ENCODE measurements at regions of chr16 and their contacts with region 1.

Region 1: GRCh38 chr16:86800894-86801293 is 222.5 kb downstream of the FOXL1 start:
- DNase-seq: no peak
- H3K4me3 ChIP-seq: no peak overlapping the region
- H3K4me3 Mint-ChIP-seq: peak overlapping the region in 1 of 2 donors; percentile 12
- H3K27ac ChIP-seq: no peak overlapping the region
- H3K27ac Mint-ChIP-seq: no peak overlapping the region
- H3K4me1 ChIP-seq: no peaks in the 10 kb centered on the region
- H3K4me1 Mint-ChIP-seq: no peaks in the 10 kb centered on the region
- H3K27me3 ChIP-seq: peaks cover 5 to 10% of the 10 kb centered on the region in 2 donors
- H3K27me3 Mint-ChIP-seq: peaks cover 4 to 12% (median 6%) of the 10 kb centered on the region in 3 donors
- CTCF ChIP-seq: no peak

Region 2: DNA sequence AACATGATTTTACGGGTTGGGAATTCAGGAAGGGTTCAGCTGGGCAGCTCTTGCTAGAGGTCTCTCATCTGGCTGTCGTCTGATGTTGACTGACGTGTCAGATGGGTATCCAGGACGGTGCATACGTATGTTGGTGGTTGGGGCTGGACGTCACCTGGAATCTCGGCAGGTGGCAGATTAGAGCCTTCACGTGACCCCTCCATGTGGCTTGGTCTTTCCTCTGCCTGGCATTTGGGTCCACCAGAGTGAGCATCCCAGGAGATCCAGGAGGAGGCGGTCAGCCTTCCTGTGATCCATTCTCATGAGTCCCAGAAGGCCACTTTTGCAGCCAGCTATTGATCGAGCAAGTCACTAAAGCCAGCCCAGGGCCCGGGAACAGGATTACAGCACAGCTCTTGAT is 19.8 kb before region 1 on chr16:
- intact Hi-C with region 1: loop called in 1 of 2 experiments (anchors 2 kb)
- DNase-seq: no peak
- H3K4me3 ChIP-seq: no peak overlapping the region
- H3K4me3 Mint-ChIP-seq: no peak overlapping the region
- H3K27ac ChIP-seq: no peak overlapping the region
- H3K27ac Mint-ChIP-seq: no peak overlapping the region
- H3K4me1 ChIP-seq: no peaks in the 10 kb centered on the region
- H3K4me1 Mint-ChIP-seq: no peaks in the 10 kb centered on the region
- H3K27me3 ChIP-seq: no peaks in the 10 kb centered on the region
- H3K27me3 Mint-ChIP-seq: peaks cover 1 to 11% (median 9%) of the 10 kb centered on the region in 3 donors
- CTCF ChIP-seq: no peak

Measured in CD14-positive monocyte (primary cell).